Lower leg skin (tissue), 4 donors: ENCODE measurements at regions of chr11 and their contacts with region 1.

Region 1: DNA sequence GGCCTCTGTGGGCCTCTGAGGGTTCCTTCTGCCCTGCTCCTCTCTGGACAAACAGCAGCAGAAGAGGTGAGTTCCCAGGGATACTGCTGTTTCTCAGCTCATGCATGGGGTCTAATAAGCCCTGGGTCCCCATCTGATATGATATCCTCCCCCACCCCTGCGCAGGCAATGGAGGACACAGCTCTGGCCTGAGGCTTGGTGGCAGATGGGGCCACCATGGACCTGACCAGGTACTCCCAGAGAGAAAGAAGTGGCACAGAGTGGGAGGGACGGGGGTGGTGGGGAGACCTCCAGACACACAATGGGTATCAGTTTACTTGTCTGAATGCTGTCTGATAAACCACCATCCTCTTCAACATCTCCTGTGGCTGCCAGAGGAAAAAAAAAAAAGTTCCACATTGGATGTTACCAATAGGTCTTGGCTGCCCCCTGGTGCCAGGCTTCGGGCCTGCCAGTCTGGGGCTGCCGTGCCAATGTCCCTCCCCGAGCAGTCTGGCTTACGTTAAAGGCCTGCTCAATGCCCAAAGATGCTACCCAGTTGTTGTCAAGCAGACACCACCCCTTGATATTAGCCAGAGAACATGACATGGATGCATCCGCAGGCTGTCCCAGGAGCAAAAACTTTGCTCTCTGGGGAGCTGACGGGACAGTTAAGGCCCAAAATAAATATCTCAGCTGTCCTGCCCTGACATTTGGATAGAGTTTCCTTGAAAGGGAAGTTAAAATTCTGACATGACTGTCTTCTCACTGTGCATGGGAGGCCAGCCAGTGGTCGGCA is 27.9 kb upstream of the ABCC8 start:
- DNase-seq: peak; percentile 54 to 91
- H3K4me3 ChIP-seq: no peak overlapping the region
- CTCF ChIP-seq: peak in 1 of 3 donors; percentile 47
- POLR2A ChIP-seq: no peak

Region 2: DNA sequence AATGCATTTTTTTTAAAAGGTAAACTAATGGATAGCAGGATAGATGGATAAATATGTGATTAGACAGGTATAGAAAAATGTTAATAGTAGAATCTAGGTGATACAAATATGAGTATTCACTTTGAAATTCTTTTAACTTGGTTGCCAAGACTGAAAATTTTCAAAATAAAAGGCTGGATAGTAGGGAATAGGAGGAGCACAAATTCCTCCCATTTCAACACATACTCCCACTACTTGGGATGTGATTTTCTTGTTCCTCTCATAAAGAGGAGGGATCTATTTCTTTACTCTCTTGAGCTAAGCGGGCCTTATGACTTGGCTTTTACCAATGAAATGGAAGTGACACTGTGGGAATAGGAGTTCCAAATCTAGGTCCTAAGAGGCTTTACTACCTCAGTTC is 332.6 kb before region 1 on chr11:
- intact Hi-C with region 1: no loop called
- DNase-seq: no peak
- H3K4me3 ChIP-seq: no peak overlapping the region
- CTCF ChIP-seq: no peak
- POLR2A ChIP-seq: no peak

Region 3: DNA sequence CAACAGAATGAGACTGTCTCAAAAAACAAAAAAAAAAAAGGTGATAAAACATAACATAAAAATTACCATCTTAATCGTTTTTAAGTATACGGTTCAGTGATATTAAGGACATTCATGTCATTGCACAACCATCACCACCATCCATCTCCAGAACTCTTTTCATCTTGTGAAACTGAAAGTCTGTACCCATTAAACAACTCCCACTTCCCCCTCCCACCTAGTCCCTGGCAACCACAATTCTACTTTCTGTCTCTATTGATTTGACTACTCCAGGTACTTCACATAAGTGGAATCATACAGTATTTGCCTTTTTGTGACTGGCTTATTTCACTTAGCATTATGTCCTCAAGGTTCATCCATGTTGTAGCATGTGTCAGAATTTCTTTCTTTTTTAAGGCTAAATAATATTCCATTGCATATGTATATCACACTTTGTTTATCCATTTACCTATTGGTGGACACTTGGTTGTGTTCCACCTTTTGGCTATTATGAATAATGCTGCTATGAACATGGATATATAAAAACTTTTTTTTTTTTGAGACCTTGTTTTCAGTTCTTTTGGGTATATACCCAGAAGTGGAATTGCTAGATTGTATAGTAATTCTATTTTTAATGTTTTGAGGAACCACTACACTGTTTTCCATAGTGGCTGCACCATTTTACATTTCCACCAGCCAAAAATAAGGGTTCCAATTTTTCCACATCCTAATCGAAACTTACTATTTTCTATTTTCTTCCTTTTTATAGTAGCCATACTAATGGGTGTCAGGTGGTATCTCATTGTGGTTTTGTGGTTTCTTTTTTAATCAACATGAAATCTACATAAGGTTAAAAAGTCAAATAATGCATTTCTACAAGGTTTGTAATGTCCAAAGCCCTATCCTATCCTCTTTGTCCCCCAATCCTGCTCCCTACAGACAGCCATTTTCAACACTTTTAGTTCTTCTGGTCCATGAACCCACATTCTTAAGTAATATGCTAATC is 273.4 kb before region 1 on chr11:
- intact Hi-C with region 1: loop called (anchors 5 kb)
- DNase-seq: no peak
- H3K4me3 ChIP-seq: no peak overlapping the region
- CTCF ChIP-seq: no peak
- POLR2A ChIP-seq: no peak

Region 4: DNA sequence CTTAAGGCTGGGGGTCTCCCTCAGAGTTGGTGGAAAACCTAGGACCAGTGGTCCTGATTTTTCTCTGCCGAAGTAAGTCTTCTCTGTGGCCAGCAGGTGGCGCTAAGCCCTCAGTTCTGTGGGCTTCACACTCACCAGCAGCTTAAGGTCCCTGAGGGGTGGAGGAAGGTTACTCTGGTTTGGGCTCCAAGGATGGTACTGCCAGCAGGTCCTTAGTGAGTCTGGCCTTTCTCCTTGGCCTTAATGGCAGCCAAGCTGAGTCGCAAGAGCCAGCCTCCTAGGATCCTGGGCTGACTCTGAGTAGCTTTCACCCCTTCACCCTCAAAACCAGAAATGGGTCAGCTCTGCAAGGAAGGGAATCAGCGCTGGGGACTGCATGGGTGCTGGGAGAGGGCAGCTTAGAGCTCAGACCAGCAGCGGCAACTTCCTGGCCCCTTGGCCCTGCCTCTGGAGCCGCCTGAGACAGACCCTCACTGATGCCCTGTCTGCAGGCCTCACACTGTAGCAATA is 120.5 kb before region 1 on chr11:
- intact Hi-C with region 1: loop called (anchors 2 kb)
- DNase-seq: peak; percentile 43 to 95
- H3K4me3 ChIP-seq: no peak overlapping the region
- CTCF ChIP-seq: no peak
- POLR2A ChIP-seq: no peak

Region 5: DNA sequence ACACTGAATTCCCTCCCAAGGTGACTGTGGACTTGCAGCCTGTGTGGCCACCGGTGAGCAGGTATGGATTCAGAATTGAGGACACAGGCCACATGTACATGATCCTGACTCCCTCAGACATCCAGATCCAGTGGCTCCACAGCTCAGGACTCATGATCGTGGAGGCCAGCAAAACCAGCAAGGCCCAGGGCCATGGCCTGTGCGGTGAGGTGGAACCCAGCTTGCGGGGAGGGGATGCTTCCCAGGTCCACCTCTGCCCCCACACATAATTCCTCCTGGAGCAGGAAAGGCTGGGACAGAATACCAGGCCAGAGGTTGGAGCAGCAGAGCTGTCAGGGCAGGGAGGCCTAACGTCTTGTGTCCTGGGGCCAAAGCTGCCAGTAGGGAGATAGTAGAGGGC is 124.6 kb after region 1 on chr11:
- intact Hi-C with region 1: no loop called
- DNase-seq: peak in 1 of 2 donors; percentile 9
- H3K4me3 ChIP-seq: no peak overlapping the region
- CTCF ChIP-seq: no peak
- POLR2A ChIP-seq: no peak